ENCODE measurements at regions of chr1 and their contacts with region 1.

Region 1: DNA sequence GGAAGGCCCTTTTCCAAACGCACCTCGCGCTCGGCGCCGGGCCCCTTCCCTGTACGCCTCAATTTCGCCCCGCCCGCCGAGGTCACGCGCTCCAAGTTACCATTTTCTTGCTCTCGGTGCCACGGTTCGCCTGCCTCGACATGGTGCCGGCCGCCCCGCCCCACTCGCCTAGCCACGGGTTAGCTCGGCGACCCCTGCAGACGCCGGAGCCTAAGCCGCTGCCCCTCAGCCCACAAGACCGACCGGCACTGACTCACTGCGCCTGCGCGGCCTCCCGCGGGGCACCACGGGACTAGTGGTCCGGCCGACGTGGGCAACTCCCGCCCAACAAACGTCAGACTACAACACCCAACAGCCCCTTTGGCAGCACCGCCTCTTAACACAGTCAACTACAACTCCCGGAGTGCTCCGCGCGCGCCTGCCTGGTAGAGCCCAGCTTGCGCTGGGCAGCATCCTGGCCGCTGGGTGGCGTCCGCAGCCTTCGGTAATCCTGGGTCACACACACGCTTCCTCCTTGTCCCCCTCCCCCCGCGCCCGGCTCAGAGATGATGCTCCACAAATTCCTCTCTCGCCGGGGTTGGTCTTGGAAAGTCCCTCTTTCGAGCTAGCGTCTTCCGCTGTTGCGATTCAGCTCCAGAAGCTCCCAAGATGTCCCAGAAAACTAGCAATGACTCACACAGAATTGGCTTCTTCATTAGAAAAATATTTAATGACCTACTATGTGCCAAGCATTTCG is at the start of gene TRAPPC3:
- DNase-seq: peak; percentile 100
- ATAC-seq: peak; percentile 94
- H3K4me3 Mint-ChIP-seq: peak within 1 kb of the TSS; percentile 97
- H3K27ac Mint-ChIP-seq: peak within 1 kb of the TSS; percentile 97
- H3K4me1 Mint-ChIP-seq: peaks cover 74% of the 10 kb centered on the region
- H3K27me3 Mint-ChIP-seq: no peaks in the 10 kb centered on the region
- total RNA-seq, gene TRAPPC3: 55.6 to 56.4 TPM

Region 2: GRCh38 chr1:36099681-36100341 is 49.6 kb before region 1 on chr1:
- CTCF ChIA-PET with region 1: interaction called, 12 read pairs
- POLR2A ChIA-PET with region 1: interaction called, 5 read pairs
- DNase-seq: peak; percentile 83
- ATAC-seq: peak; percentile 93
- H3K4me3 Mint-ChIP-seq: no peak overlapping the region
- H3K27ac Mint-ChIP-seq: no peak overlapping the region
- H3K4me1 Mint-ChIP-seq: peaks cover 10% of the 10 kb centered on the region
- H3K27me3 Mint-ChIP-seq: no peaks in the 10 kb centered on the region

Region 3: DNA sequence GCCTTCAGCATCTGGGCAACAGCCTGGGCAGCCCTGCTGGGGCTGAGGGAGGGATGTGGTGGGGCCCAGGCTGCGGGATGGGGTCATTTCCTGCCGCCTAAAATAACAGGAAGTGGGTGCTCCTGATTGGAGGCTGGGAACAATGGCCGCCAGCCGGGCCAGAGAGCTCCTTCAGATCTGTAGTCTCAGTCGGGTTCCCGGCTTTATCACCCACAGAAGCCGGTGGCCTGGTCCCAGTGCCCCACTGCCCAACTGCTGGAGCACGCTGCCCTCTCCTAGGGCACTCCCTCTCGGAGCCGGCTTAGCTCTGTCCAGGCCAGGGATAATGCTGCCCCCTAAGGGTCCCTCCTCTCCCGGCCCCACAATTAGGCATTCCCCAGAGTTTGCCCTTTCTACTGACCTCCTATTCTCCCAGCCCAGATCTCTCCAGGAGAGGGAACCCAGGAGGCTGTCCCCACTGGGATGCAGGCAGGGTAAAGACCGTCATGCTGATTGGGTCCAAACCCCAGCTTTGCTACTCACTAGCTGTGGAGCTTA is 11.6 kb after region 1 on chr1:
- CTCF ChIA-PET with region 1: interaction called, 157 read pairs
- POLR2A ChIA-PET with region 1: interaction called, 56 read pairs
- DNase-seq: peak; percentile 84
- ATAC-seq: peak; percentile 43
- H3K4me3 Mint-ChIP-seq: peak overlapping the region; percentile 72
- H3K27ac Mint-ChIP-seq: peak overlapping the region; percentile 89
- H3K4me1 Mint-ChIP-seq: peaks cover 68% of the 10 kb centered on the region
- H3K27me3 Mint-ChIP-seq: no peaks in the 10 kb centered on the region

Region 4: GRCh38 chr1:36187800-36188593 is 38.6 kb after region 1 on chr1:
- CTCF ChIA-PET with region 1: interaction called, 209 read pairs
- POLR2A ChIA-PET with region 1: interaction called, 27 read pairs
- DNase-seq: peak; percentile 87
- ATAC-seq: peak; percentile 99
- H3K4me3 Mint-ChIP-seq: no peak overlapping the region
- H3K27ac Mint-ChIP-seq: peak overlapping the region; percentile 73
- H3K4me1 Mint-ChIP-seq: peaks cover 5% of the 10 kb centered on the region
- H3K27me3 Mint-ChIP-seq: no peaks in the 10 kb centered on the region

Region 5: GRCh38 chr1:36279110-36279788 is 129.8 kb after region 1 on chr1:
- CTCF ChIA-PET with region 1: interaction called, 18 read pairs
- POLR2A ChIA-PET with region 1: interaction called, 5 read pairs
- DNase-seq: no peak
- ATAC-seq: no peak
- H3K4me3 Mint-ChIP-seq: no peak overlapping the region
- H3K27ac Mint-ChIP-seq: peak overlapping the region; percentile 62
- H3K4me1 Mint-ChIP-seq: peaks cover 16% of the 10 kb centered on the region
- H3K27me3 Mint-ChIP-seq: no peaks in the 10 kb centered on the region

Region 6: GRCh38 chr1:36369061-36369861 is 219.9 kb after region 1 on chr1:
- CTCF ChIA-PET with region 1: interaction called, 29 read pairs
- POLR2A ChIA-PET with region 1: interaction called, 8 read pairs
- DNase-seq: peak; percentile 91
- ATAC-seq: peak; percentile 52
- H3K4me3 Mint-ChIP-seq: no peak overlapping the region
- H3K27ac Mint-ChIP-seq: peak overlapping the region; percentile 50
- H3K4me1 Mint-ChIP-seq: peaks cover 73% of the 10 kb centered on the region
- H3K27me3 Mint-ChIP-seq: no peaks in the 10 kb centered on the region

Region 7: DNA sequence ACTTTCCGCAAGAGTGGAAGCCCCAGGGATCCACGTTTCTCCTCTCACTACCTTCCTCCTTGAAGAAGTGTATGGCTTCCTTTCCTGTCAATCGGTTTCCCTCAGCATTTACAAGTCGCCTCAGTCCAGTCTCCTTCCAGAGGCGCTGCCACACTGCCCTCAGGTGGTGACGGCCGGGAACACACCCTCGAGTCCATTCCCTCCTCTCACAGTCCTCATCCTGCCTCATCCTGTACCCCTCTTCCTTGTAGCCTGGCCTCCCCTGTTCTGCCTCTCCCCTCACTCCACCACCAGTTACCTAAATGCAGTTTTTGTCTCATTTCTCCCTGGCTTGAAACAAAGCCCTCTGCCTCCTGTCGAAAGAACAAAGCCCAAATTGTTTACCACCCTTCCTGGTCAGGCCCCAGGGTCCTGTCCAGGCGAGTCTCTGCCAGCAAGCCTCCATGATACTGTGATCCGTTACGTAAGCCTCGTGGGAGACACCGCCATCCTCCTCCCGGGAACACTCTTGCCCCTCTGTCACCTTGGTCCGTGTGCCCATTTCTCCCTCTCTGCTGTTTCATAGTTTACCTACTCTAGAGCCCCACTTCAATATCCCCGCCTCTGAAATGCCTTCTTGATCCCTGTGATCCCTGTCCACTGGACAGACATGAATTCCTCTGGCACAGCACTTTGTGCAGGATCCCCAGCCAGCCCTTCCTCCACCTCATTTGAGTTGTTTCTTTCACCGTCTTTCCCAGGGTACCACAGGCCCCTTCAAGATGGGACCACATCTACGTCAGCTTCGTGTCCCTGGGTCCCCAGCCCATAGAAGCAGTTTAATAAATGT is 271.6 kb after region 1 on chr1:
- CTCF ChIA-PET with region 1: interaction called, 14 read pairs
- POLR2A ChIA-PET with region 1: no interaction called
- DNase-seq: peak; percentile 94
- ATAC-seq: peak; percentile 98
- H3K4me3 Mint-ChIP-seq: peak overlapping the region; percentile 53
- H3K27ac Mint-ChIP-seq: peak overlapping the region; percentile 82
- H3K4me1 Mint-ChIP-seq: peaks cover 16% of the 10 kb centered on the region
- H3K27me3 Mint-ChIP-seq: no peaks in the 10 kb centered on the region